ENCODE measurements at regions of chr6 and their contacts with region 1.

Region 1: GRCh38 chr6:30541515-30542403 is 14.5 kb downstream of the GNL1 start:
- DNase-seq: peak; percentile 91
- H3K4me3 ChIP-seq: peak overlapping the region; percentile 18 to 47 (median 21)
- H3K27ac ChIP-seq: peak overlapping the region; percentile 81
- H3K4me1 ChIP-seq: peaks cover 29% of the 10 kb centered on the region
- H3K27me3 ChIP-seq: no peaks in the 10 kb centered on the region
- CTCF ChIP-seq: peak; percentile 96 to 99
- POLR2A ChIP-seq: peak; percentile 55

Region 2: DNA sequence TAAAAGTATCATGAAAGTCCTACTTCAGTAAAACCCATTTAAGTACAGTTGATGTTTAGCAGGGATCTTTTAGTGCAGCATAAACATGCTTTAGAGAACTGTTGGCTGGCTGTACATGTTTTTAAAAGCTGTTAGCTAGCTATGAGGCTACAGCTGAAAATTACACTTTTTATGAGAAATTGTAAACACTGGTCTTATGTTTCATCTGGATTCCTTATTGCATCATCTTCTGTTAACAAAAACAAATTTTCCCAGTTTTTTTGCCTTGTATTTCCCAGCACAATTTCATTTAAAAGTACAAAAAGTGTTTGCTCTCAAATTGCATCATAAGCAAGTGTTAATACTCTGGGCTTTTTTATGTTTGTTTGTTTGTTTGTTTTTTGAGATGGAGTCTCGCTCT is 70.8 kb before region 1 on chr6:
- CTCF ChIA-PET with region 1: interaction called, 10 read pairs
- POLR2A ChIA-PET with region 1: no interaction called
- dilution Hi-C with region 1: no loop called
- intact Hi-C with region 1: no loop called
- DNase-seq: no peak
- H3K4me3 ChIP-seq: no peak overlapping the region
- H3K27ac ChIP-seq: no peak overlapping the region
- H3K4me1 ChIP-seq: no peaks in the 10 kb centered on the region
- H3K27me3 ChIP-seq: peaks cover 46 to 55% of the 10 kb centered on the region in 2 experiments
- CTCF ChIP-seq: no peak
- POLR2A ChIP-seq: no peak

Region 3: GRCh38 chr6:30500421-30501355 is 41.1 kb before region 1 on chr6:
- CTCF ChIA-PET with region 1: interaction called, 134 read pairs
- POLR2A ChIA-PET with region 1: interaction called, 5 read pairs
- dilution Hi-C with region 1: no loop called
- intact Hi-C with region 1: loop called (anchors 1 kb)
- DNase-seq: peak; percentile 94
- H3K4me3 ChIP-seq: peak overlapping the region in 1 of 3 experiments; percentile 38
- H3K27ac ChIP-seq: peak overlapping the region; percentile 79
- H3K4me1 ChIP-seq: peaks cover 31% of the 10 kb centered on the region
- H3K27me3 ChIP-seq: no peaks in the 10 kb centered on the region
- CTCF ChIP-seq: no peak
- POLR2A ChIP-seq: no peak

Region 4: DNA sequence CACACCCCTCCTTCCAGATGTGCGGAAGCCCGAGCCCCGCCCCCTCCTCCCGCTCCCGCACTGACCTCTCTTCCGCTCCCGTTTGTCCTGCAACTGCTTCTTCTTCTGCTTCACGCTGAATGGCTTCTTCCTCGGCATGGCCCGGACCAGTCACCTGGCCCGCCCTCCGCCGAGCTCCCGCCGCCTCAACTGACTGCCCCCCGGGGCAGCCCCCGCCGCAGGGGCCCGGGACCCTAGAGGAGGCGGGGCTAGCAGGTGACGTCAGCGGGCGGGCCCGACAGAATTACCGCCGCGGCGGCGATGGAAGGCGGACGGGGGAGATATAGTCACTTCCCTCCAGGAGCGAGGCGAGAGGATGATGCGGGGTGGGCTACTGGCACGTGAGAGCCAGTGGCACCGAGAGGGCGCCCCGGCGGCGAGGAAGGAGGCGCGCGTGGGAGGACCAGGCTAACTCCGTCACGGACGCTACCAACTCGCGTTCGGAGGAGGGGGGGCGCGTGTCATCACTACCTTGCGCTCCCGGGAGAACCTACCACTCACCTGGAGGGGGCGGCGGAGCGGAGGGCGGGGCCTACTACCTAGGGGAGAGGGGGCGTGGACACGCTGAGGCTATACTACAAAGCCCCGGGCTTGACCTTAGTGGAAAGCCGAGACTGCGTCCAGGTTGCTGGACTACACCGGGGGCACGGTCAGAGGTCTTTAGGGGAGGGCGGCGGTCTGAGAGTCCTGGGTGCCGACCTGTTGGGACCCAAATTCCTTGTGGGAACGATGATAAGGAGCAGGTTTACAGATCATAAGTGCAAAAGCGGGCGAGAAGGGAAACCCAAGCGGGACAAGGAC is 14.5 kb after region 1 on chr6 and contains the start of gene GNL1:
- CTCF ChIA-PET with region 1: interaction called, 65 read pairs
- POLR2A ChIA-PET with region 1: interaction called, 3 read pairs
- dilution Hi-C with region 1: no loop called
- intact Hi-C with region 1: loop called (anchors 1 kb)
- DNase-seq: peak; percentile 88
- H3K4me3 ChIP-seq: peak within 1 kb of the TSS; percentile 39 to 93 (median 52)
- H3K27ac ChIP-seq: peak within 1 kb of the TSS; percentile 84
- H3K4me1 ChIP-seq: peaks cover 19% of the 10 kb centered on the region
- H3K27me3 ChIP-seq: no peaks in the 10 kb centered on the region
- CTCF ChIP-seq: no peak
- POLR2A ChIP-seq: no peak
- total RNA-seq, gene GNL1: 87.3 and 103 TPM in 2 replicates

Region 5: GRCh38 chr6:30590994-30591393 is 49.2 kb after region 1 on chr6:
- CTCF ChIA-PET with region 1: interaction called, 53 read pairs
- POLR2A ChIA-PET with region 1: no interaction called
- dilution Hi-C with region 1: no loop called
- intact Hi-C with region 1: no loop called
- DNase-seq: peak; percentile 49
- H3K4me3 ChIP-seq: no peak overlapping the region
- H3K27ac ChIP-seq: no peak overlapping the region
- H3K4me1 ChIP-seq: peaks cover 2% of the 10 kb centered on the region
- H3K27me3 ChIP-seq: no peaks in the 10 kb centered on the region
- CTCF ChIP-seq: no peak
- POLR2A ChIP-seq: no peak

Region 6: GRCh38 chr6:30672445-30673253 is 130.9 kb after region 1 on chr6 and contains the start of gene DHX16:
- CTCF ChIA-PET with region 1: interaction called, 10 read pairs
- POLR2A ChIA-PET with region 1: no interaction called
- dilution Hi-C with region 1: no loop called
- intact Hi-C with region 1: loop called (anchors 5 kb)
- DNase-seq: peak; percentile 97
- H3K4me3 ChIP-seq: peak within 1 kb of the TSS; percentile 38 to 82 (median 73)
- H3K27ac ChIP-seq: peak within 1 kb of the TSS; percentile 11
- H3K4me1 ChIP-seq: peaks cover 6% of the 10 kb centered on the region
- H3K27me3 ChIP-seq: no peaks in the 10 kb centered on the region
- CTCF ChIP-seq: peak; percentile 84 to 93
- POLR2A ChIP-seq: peak; percentile 85
- total RNA-seq, gene DHX16: 36.3 and 38.2 TPM in 2 replicates

Region 7: DNA sequence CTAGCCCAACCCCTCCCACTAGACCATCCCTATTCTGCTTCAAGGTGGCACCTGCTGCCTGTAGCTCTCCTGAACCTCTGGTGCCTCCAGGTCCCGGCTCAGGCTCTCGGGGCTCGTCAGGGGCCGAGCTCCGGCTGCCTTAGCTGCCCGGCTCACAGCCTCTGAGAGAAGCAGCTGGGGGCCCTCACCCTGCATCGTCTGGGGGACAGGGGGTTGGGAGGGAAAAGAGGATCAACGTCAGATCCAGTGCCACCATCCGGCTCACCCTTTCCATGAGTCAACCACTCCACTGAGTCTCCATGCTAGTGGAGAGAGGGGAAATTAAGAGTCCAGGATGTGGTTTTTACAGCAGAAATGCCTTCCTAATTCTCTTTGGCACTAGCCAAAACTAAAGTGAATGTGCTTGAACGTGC is 1097.7 kb after region 1 on chr6:
- CTCF ChIA-PET with region 1: no interaction called
- POLR2A ChIA-PET with region 1: no interaction called
- dilution Hi-C with region 1: no loop called
- intact Hi-C with region 1: no loop called
- DNase-seq: no peak
- H3K4me3 ChIP-seq: no peak overlapping the region
- H3K27ac ChIP-seq: no peak overlapping the region
- H3K4me1 ChIP-seq: no peaks in the 10 kb centered on the region
- H3K27me3 ChIP-seq: no peaks in the 10 kb centered on the region
- CTCF ChIP-seq: no peak
- POLR2A ChIP-seq: no peak